H1 (cell line): ENCODE measurements at regions of chr19 and their contacts with region 1.

Region 1: GRCh38 chr19:38647368-38647965 is at the start of gene ACTN4:
- DNase-seq: peak; percentile 93 to 100
- H3K4me3 ChIP-seq: peak within 1 kb of the TSS; percentile 91 to 98 (median 95)
- H3K27ac ChIP-seq: peak within 1 kb of the TSS; percentile 71; the same call in 1 of the 2 replicates
- H3K4me1 ChIP-seq: peaks cover 5 to 19% (median 12%) of the 10 kb centered on the region in 4 experiments
- H3K27me3 ChIP-seq: no peaks in the 10 kb centered on the region
- CTCF ChIP-seq: no peak
- EP300 ChIP-seq: no peak
- POLR2A ChIP-seq: peak; percentile 92 to 93
- RAD21 ChIP-seq: no peak
- total RNA-seq, gene ACTN4: 520 and 530 TPM in 2 replicates

Region 2: GRCh38 chr19:38666663-38667511 is 19.4 kb after region 1 on chr19:
- CTCF ChIA-PET with region 1: interaction called, 3 read pairs
- POLR2A ChIA-PET with region 1: interaction called, 374 read pairs
- DNase-seq: no peak
- H3K4me3 ChIP-seq: peak overlapping the region in 3 of 4 experiments; percentile 1 to 31 (median 6); a peak in 4 of 8 replicates
- H3K27ac ChIP-seq: peak overlapping the region; percentile 84
- H3K4me1 ChIP-seq: peaks cover 41 to 60% (median 47%) of the 10 kb centered on the region in 4 experiments
- H3K27me3 ChIP-seq: no peaks in the 10 kb centered on the region
- CTCF ChIP-seq: no peak
- EP300 ChIP-seq: no peak
- POLR2A ChIP-seq: no peak
- RAD21 ChIP-seq: no peak

Region 3: DNA sequence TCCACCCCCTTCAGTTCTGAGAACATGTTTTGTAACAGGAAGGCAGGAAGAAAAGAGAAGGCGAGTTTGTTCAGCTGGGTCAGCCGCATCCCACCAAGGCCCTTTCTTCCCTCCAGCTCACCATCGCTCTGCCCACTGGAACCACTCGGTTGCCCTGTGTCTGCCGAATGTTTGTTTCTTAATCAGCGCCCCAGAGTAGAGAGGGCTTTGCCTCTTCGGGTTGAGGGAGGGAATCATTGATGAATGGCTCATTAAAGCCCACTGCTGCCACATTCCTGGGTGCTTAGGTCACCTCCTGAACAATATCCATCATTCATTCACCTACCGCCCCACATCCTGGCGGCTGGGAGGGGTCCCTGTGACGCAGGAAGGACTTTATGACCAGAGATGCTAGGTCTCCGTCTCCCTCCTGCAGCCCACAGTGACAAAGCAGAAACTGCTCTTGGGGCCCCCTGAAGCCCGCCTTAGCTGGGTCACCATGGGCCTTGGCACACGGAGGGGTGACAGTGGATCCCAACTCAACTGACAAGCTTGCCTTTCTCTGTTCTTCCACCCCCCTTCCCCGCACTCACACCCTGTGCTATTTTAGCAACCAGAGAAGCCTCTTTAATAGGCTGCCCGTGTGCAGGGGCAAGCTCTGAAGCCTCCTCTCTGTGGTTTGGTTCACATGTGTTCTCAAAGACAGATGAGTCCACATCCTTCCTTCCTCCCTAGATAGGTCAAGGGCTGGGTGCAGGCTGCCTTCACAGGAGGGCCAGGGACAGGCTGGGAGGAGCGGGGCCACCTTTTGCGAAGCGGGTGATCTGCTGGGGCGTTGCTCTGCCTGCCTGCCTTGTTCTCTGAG is 46.1 kb after region 1 on chr19:
- CTCF ChIA-PET with region 1: interaction called, 4 read pairs
- POLR2A ChIA-PET with region 1: interaction called, 495 read pairs
- DNase-seq: no peak
- H3K4me3 ChIP-seq: no peak overlapping the region
- H3K27ac ChIP-seq: peak overlapping the region; percentile 84
- H3K4me1 ChIP-seq: peaks cover 3 to 36% (median 20%) of the 10 kb centered on the region in 4 experiments
- H3K27me3 ChIP-seq: no peaks in the 10 kb centered on the region
- CTCF ChIP-seq: no peak
- EP300 ChIP-seq: peak in 1 of 2 experiments; percentile 16; a peak in 1 of 3 replicates
- POLR2A ChIP-seq: peak in 1 of 2 experiments; percentile 76; a peak in 2 of 3 replicates
- RAD21 ChIP-seq: no peak

Region 4: GRCh38 chr19:38701455-38702063 is 54.1 kb after region 1 on chr19:
- CTCF ChIA-PET with region 1: interaction called, 5 read pairs
- POLR2A ChIA-PET with region 1: interaction called, 495 read pairs
- DNase-seq: no peak
- H3K4me3 ChIP-seq: no peak overlapping the region
- H3K27ac ChIP-seq: no peak overlapping the region
- H3K4me1 ChIP-seq: peaks cover 0 to 16% (median 9%) of the 10 kb centered on the region in 4 experiments; a peak in 5 of 7 replicates
- H3K27me3 ChIP-seq: no peaks in the 10 kb centered on the region; a peak in 1 of 7 replicates
- CTCF ChIP-seq: no peak
- EP300 ChIP-seq: no peak
- POLR2A ChIP-seq: no peak
- RAD21 ChIP-seq: no peak